Activated naive CD8-positive, alpha-beta T cell treated with anti-CD3 and anti-CD28 coated beads, Interleukin-2, amount 10 ng/mL, durations not matched to agents 7 days and 5 days (primary cell): ENCODE measurements at regions of chr19 and their contacts with region 1.

Region 1: DNA sequence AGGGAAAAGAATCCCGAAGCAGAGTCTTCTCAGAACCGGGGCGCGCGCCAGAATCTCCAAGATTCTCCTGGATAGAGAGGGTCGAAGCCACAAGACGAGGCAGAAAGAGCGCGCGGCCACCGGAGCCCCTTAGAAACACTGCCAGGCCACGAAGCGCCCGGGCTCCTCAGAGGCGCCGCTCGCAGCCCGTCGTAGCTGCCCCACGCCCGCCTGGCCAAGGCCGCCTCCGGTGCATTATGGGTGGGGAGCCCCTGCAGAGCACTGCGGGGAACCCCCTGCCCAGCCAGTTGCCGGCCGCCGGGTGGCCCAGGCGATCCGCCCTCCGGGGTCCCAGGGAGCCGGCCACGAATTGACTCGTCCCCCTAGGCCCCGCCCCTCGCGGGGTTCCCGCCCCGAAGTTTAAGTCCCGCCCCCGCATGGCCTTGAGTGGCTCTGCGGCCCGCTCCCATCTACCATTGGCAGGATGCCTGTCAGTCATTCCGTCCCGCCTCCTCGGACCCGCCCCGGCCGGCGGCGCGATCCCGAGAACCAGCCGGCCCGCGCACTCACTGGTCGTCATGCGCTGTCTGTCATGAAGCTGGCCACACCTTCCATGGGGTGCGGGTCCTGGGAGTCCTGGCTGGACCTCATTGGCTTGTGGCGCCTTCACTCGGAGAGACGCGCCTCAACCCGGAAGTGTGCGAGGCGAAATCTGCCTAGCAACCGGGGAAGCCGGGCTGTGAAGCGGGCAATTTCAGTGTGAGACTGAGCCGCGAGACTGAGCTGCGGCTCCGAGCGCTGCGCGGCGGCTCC is 20.2 kb upstream of the GATAD2A start:
- DNase-seq: peak; percentile 99
- ATAC-seq: peak; percentile 95
- H3K4me3 Mint-ChIP-seq: peak overlapping the region; percentile 89
- H3K27ac Mint-ChIP-seq: peak overlapping the region; percentile 93
- H3K4me1 Mint-ChIP-seq: peaks cover 35% of the 10 kb centered on the region
- H3K27me3 Mint-ChIP-seq: no peaks in the 10 kb centered on the region

Region 2: GRCh38 chr19:19366612-19367396 is 18.5 kb before region 1 on chr19:
- POLR2A ChIA-PET with region 1: interaction called, 15 read pairs
- DNase-seq: peak; percentile 85
- ATAC-seq: peak; percentile 83
- H3K4me3 Mint-ChIP-seq: peak overlapping the region; percentile 49
- H3K27ac Mint-ChIP-seq: peak overlapping the region; percentile 84
- H3K4me1 Mint-ChIP-seq: peaks cover 13% of the 10 kb centered on the region
- H3K27me3 Mint-ChIP-seq: no peaks in the 10 kb centered on the region